Endothelial cell of umbilical vein (primary cell): ENCODE measurements at regions of chr14 and their contacts with region 1.

Region 1: DNA sequence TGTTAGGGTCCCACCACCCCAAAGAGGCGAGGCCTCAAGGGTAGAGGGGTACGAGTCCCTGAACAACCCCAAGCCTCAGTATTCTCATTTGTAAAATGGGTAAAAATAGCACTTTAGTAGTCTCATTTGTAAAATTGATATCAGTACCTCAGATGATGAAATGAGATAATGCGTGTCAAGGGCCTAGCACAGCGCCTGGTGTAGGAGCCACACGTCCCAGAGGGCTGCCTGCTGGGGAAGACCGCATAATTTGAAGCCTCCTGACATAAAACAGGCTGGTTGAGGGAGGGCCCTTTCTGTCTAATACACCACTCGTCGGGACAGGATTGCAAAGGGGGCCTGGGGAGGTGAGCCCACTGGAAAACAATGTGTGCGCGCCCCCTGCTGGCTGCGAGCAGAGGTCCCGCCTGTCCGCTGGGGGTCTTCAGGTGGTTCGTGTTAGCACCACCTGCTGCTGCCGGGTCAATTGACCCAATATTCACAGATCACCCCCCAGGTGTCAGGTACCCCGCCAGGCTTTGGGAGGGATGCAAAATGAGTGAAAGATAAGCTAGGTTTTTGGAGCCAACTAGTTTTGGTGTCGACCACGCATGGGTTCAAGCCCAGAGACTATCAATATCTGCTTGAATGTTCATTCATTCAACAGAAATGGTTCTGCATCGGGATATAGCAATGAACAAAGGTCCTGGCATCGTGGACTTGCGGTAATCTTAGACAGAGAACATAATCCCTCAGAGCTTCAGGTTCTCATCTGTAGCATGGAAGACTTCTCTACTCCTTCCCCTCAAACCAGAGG is 24.7 kb upstream of the IRF2BPL start:
- DNase-seq: peak; percentile 81
- H3K4me3 ChIP-seq: no peak overlapping the region
- H3K27ac ChIP-seq: peak overlapping the region; percentile 6
- H3K4me1 ChIP-seq: peaks cover 11% of the 10 kb centered on the region
- H3K27me3 ChIP-seq: no peaks in the 10 kb centered on the region
- CTCF ChIP-seq: peak; percentile 95 to 96
- POLR2A ChIP-seq: no peak

Region 2: GRCh38 chr14:76910371-76910890 is 142.8 kb before region 1 on chr14:
- CTCF ChIA-PET with region 1: interaction called, 67 read pairs
- POLR2A ChIA-PET with region 1: no interaction called
- dilution Hi-C with region 1: no loop called
- intact Hi-C with region 1: loop called (anchors 1 kb)
- DNase-seq: no peak
- H3K4me3 ChIP-seq: no peak overlapping the region
- H3K27ac ChIP-seq: no peak overlapping the region
- H3K4me1 ChIP-seq: peaks cover 3% of the 10 kb centered on the region
- H3K27me3 ChIP-seq: no peaks in the 10 kb centered on the region
- CTCF ChIP-seq: no peak
- POLR2A ChIP-seq: no peak

Region 3: GRCh38 chr14:76947078-76947837 is 106.0 kb before region 1 on chr14:
- CTCF ChIA-PET with region 1: interaction called, 6 read pairs
- POLR2A ChIA-PET with region 1: no interaction called
- dilution Hi-C with region 1: no loop called
- intact Hi-C with region 1: loop called (anchors 1 kb)
- DNase-seq: peak; percentile 83
- H3K4me3 ChIP-seq: no peak overlapping the region
- H3K27ac ChIP-seq: peak overlapping the region; percentile 72
- H3K4me1 ChIP-seq: peaks cover 40% of the 10 kb centered on the region
- H3K27me3 ChIP-seq: no peaks in the 10 kb centered on the region
- CTCF ChIP-seq: peak; percentile 28 to 54
- POLR2A ChIP-seq: no peak

Region 4: GRCh38 chr14:76962303-76962660 is 91.0 kb before region 1 on chr14:
- CTCF ChIA-PET with region 1: interaction called, 9 read pairs
- POLR2A ChIA-PET with region 1: no interaction called
- dilution Hi-C with region 1: no loop called
- intact Hi-C with region 1: loop called (anchors 1 kb)
- DNase-seq: no peak
- H3K4me3 ChIP-seq: peak overlapping the region in 1 of 3 experiments; percentile 43
- H3K27ac ChIP-seq: peak overlapping the region; percentile 76
- H3K4me1 ChIP-seq: peaks cover 43% of the 10 kb centered on the region
- H3K27me3 ChIP-seq: no peaks in the 10 kb centered on the region
- CTCF ChIP-seq: no peak
- POLR2A ChIP-seq: no peak

Region 5: GRCh38 chr14:77023001-77023996 is 29.9 kb before region 1 on chr14:
- CTCF ChIA-PET with region 1: interaction called, 46 read pairs
- POLR2A ChIA-PET with region 1: interaction called, 6 read pairs
- dilution Hi-C with region 1: no loop called
- intact Hi-C with region 1: loop called (anchors 1 kb)
- DNase-seq: peak; percentile 28
- H3K4me3 ChIP-seq: no peak overlapping the region
- H3K27ac ChIP-seq: no peak overlapping the region
- H3K4me1 ChIP-seq: peaks cover 30% of the 10 kb centered on the region
- H3K27me3 ChIP-seq: no peaks in the 10 kb centered on the region
- CTCF ChIP-seq: no peak
- POLR2A ChIP-seq: no peak

Region 6: DNA sequence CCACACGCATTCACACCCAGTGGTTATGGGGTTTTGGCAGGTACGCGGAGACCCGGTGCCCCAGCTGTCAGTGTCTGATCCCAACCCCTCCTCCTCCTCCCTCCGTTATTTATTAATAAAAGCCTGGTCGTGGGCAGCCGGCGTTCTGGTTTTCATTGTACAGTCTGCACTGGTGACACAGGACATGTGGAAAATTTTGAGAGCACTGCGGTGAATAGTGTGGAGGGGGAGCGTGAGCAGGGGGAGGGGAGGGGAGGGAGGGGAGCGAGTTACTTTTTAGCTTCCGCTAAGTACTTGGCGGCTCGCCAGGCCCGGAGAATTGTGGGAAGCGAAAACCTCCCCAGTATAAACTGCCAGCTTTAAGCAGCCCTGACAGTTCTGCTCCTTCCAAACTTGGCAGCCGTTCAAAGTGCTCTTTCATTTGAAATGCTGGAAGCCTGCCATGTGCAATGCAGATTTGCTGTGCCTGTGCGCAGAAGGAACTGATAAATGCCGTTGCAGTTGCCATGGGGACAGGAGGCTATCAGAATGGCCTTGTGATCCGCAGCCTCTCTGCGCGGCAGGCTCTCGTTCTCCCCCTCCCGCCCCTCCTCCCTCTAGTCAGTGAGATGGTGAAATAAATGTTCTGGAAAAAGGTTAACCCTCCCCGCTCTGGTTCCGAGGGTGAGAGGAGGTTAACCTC is 13.0 kb before region 1 on chr14:
- CTCF ChIA-PET with region 1: interaction called, 20 read pairs
- POLR2A ChIA-PET with region 1: no interaction called
- dilution Hi-C with region 1: no loop called
- intact Hi-C with region 1: loop called (anchors 1 kb)
- DNase-seq: peak; percentile 99
- H3K4me3 ChIP-seq: peak overlapping the region in 1 of 3 experiments; percentile 29
- H3K27ac ChIP-seq: peak overlapping the region; percentile 93
- H3K4me1 ChIP-seq: peaks cover 68% of the 10 kb centered on the region
- H3K27me3 ChIP-seq: no peaks in the 10 kb centered on the region
- CTCF ChIP-seq: no peak
- POLR2A ChIP-seq: no peak

Region 7: GRCh38 chr14:77133720-77134338 is 80.6 kb after region 1 on chr14:
- CTCF ChIA-PET with region 1: no interaction called
- POLR2A ChIA-PET with region 1: no interaction called
- dilution Hi-C with region 1: no loop called
- intact Hi-C with region 1: no loop called
- DNase-seq: peak; percentile 61
- H3K4me3 ChIP-seq: no peak overlapping the region
- H3K27ac ChIP-seq: no peak overlapping the region
- H3K4me1 ChIP-seq: no peaks in the 10 kb centered on the region
- H3K27me3 ChIP-seq: peaks cover 5 to 13% of the 10 kb centered on the region in 2 experiments
- CTCF ChIP-seq: no peak
- POLR2A ChIP-seq: no peak

Region 8: GRCh38 chr14:77158175-77158891 is 105.1 kb after region 1 on chr14:
- CTCF ChIA-PET with region 1: no interaction called
- POLR2A ChIA-PET with region 1: no interaction called
- dilution Hi-C with region 1: no loop called
- intact Hi-C with region 1: no loop called
- DNase-seq: peak; percentile 20
- H3K4me3 ChIP-seq: no peak overlapping the region
- H3K27ac ChIP-seq: no peak overlapping the region
- H3K4me1 ChIP-seq: no peaks in the 10 kb centered on the region
- H3K27me3 ChIP-seq: peaks cover 9 to 12% of the 10 kb centered on the region in 2 experiments
- CTCF ChIP-seq: no peak
- POLR2A ChIP-seq: no peak

Region 9: DNA sequence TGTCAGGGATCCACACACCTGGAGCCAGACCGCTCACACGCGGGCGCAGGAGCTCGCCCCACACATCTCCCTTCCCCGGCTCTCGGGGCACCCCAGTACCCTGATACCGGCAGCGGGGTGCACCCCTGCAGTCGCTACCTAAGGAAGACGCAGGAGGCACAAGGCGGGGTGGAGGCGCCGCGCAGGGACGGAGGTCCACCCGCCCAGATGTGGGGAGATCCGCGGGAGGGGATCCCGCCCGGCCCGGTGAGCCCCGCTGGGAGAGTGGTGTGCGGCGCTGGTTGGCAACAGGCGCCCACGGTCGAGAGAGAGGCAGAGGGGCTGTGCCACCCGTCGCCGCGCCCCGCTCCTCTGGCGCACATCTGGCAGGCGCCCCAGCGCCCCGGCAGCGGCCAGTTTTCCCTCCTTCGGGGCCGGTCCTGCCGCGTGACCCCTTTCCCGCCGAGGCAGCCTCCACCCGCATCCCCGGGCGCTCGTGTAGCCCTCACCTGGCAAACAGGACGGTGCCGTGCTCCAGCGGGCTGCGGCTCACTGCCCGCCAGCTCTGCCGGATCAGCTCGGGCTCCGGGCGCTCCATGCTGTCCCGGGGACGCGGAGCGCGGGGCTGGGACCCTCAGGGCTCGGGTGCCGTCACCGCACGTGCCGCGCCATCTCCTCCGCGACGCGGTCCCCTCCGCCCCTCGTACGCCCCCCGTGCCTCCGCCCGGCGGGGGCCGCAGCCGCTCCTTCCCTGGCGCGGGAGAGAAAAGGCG is 217.3 kb after region 1 on chr14:
- CTCF ChIA-PET with region 1: no interaction called
- POLR2A ChIA-PET with region 1: no interaction called
- dilution Hi-C with region 1: no loop called
- intact Hi-C with region 1: no loop called
- DNase-seq: no peak
- H3K4me3 ChIP-seq: no peak overlapping the region
- H3K27ac ChIP-seq: no peak overlapping the region
- H3K4me1 ChIP-seq: no peaks in the 10 kb centered on the region
- H3K27me3 ChIP-seq: peaks cover 27 to 30% of the 10 kb centered on the region in 2 experiments
- CTCF ChIP-seq: no peak
- POLR2A ChIP-seq: no peak

Region 10: GRCh38 chr14:77320238-77320935 is 267.1 kb after region 1 on chr14 and contains the start of gene POMT2:
- CTCF ChIA-PET with region 1: no interaction called
- POLR2A ChIA-PET with region 1: no interaction called
- dilution Hi-C with region 1: no loop called
- intact Hi-C with region 1: no loop called
- DNase-seq: peak; percentile 94
- H3K4me3 ChIP-seq: peak within 1 kb of the TSS; percentile 66 to 93 (median 76)
- H3K27ac ChIP-seq: peak within 1 kb of the TSS; percentile 94
- H3K4me1 ChIP-seq: peaks cover 17% of the 10 kb centered on the region
- H3K27me3 ChIP-seq: no peaks in the 10 kb centered on the region
- CTCF ChIP-seq: peak; percentile 33 to 44
- POLR2A ChIP-seq: no peak
- total RNA-seq, gene POMT2: 43.2 and 48.2 TPM in 2 replicates